HEK293T (cell line): ENCODE measurements at regions of chr17 and their contacts with region 1.

Region 1: GRCh38 chr17:56994009-56994792 is 16.3 kb downstream of the SCPEP1 start:
- DNase-seq: no peak

Region 2: GRCh38 chr17:57016747-57017082 is 22.5 kb after region 1 on chr17:
- CTCF ChIA-PET with region 1: no interaction called
- POLR2A ChIA-PET with region 1: no interaction called
- DNase-seq: no peak

Region 3: GRCh38 chr17:57097832-57098421 is 103.7 kb after region 1 on chr17:
- CTCF ChIA-PET with region 1: interaction called, 10 read pairs
- POLR2A ChIA-PET with region 1: no interaction called
- DNase-seq: no peak